ENCODE measurements at regions of chr13 and their contacts with region 1.

Region 1: DNA sequence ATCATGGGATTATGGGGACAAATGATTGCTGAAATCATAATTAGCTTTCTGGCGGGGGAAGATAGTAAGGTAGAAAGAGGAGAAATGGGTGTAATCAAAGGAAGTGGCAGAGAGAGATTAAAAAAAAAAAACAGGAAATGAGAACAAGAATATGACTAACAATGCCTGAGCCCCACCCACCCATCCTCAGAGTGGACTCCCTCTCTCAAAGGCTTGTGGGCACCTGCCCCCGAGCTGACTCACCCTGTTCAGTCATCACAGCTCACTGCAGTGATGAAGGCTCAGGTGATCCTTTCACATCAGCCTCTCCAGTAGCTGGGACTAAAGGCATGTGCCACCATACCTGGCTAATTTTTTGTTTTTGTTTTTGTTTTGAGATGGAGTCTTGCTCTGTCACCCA is 26.4 kb upstream of the TPT1 start:
- DNase-seq: peak; percentile 93
- H3K4me3 Mint-ChIP-seq: peak overlapping the region; percentile 22
- H3K27ac Mint-ChIP-seq: peak overlapping the region; percentile 86
- H3K4me1 Mint-ChIP-seq: peaks cover 66% of the 10 kb centered on the region
- H3K27me3 Mint-ChIP-seq: no peaks in the 10 kb centered on the region

Region 2: DNA sequence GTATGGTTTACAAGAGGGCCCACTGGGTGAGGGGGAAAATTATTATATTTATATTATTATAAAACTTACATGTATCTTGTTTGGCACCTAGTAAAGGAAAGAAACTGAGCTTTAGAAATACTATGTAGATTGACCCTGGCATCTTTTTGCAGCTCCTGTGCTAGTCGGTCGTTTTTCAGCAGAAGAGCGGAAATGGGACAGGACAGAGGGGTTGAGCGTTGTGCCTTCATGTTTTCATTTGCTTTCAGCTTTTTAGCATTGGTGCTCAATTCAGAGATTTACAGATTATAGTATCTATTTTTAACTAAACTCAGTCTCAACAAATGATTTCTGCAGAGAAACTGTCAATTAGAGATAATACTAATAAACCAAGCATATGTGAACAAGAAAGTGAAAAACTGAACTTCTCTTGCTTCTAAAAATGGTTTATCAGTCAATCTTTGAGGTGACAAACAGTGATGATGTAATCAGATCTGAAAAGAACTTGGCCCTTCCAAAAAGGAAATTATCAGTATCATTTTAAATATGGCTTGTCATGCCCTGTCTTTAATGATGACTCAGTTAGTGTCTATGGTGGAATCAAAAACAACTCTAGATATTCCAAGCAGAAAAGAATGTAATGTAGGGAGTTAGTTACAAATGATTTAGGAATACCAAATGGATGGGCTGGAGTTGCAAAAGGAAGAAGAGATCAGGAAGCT is 109.6 kb before region 1 on chr13:
- CTCF ChIA-PET with region 1: no interaction called
- POLR2A ChIA-PET with region 1: no interaction called
- DNase-seq: no peak
- H3K4me3 Mint-ChIP-seq: no peak overlapping the region
- H3K27ac Mint-ChIP-seq: peak overlapping the region; percentile 50
- H3K4me1 Mint-ChIP-seq: peaks cover 23% of the 10 kb centered on the region
- H3K27me3 Mint-ChIP-seq: no peaks in the 10 kb centered on the region

Region 3: DNA sequence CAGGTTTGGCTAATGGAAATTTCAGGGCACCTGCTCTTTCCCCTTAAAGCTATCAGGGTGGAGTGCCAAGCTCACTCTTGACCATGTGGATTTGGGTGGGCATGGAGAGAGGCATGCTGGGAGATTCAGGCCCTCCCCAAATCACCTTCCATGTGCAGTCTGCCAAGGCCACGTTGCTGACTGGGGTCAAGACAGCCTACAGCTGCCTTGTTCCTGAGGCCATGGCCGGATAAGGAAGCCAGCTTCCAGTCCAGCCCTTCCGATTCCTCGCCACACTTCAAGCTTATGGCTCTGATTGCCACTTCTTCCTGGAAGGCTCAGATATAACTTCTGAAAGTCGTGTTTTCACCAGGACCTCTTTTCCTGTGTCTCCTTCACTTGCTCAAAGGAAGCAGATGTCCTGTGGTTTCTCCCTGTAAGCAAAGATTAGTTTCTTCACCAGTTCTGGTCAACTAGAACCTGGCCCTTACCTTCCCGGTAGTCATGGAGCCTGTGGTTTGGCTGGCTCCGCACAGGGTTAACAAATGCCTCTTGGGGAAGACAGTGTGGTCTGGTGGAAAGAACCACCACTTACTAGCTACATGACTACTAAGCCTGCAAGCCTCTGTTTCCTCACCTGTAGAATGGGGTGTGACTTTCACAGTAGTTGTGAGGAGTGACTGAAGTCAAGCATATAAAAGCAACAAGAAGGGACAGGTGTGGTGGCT is 10.2 kb before region 1 on chr13:
- CTCF ChIA-PET with region 1: interaction called, 6 read pairs
- POLR2A ChIA-PET with region 1: interaction called, 14 read pairs
- DNase-seq: no peak
- H3K4me3 Mint-ChIP-seq: no peak overlapping the region
- H3K27ac Mint-ChIP-seq: peak overlapping the region; percentile 72
- H3K4me1 Mint-ChIP-seq: peaks cover 41% of the 10 kb centered on the region
- H3K27me3 Mint-ChIP-seq: no peaks in the 10 kb centered on the region

Region 4: GRCh38 chr13:45393941-45394570 is 26.7 kb after region 1 on chr13:
- CTCF ChIA-PET with region 1: interaction called, 78 read pairs
- POLR2A ChIA-PET with region 1: interaction called, 18 read pairs
- DNase-seq: peak; percentile 26
- H3K4me3 Mint-ChIP-seq: no peak overlapping the region
- H3K27ac Mint-ChIP-seq: no peak overlapping the region
- H3K4me1 Mint-ChIP-seq: peaks cover 48% of the 10 kb centered on the region
- H3K27me3 Mint-ChIP-seq: no peaks in the 10 kb centered on the region

Region 5: DNA sequence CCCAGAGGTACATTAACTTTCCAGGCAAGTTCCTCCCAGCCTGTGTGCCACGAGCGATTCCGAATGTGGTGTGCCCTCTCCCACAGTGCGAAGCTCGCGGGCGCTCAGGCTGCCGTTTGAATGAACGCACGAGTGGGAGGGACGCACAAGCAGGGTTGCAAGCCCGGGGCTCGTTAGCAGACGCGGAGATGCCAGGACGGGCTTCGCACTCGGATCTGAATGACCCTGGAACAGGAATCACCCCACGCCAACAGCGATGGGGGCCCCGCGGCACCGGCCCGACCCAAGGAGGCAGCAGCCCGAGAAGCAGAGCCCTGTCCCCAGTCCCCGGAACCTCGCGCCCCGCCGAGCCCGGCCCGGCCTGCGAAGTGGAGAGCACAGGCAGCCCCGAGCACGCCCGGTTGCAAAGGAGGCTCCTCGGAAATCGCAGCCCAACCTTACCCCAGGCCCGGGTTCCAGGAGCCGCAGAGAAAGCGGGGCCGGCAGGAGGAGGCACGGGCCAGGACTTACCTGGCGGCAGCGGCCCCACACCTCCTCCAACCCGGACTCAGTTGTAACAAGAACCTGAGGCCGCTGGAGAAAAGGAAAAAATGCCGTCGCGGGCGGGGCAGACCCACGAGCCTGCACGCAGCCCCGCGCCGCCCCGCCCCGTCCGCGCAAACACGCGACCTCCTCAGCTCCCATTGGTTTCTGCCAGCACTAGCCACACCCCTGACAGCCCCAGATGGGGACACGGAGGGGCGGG is 50.6 kb after region 1 on chr13 and contains the start of gene SLC25A30:
- CTCF ChIA-PET with region 1: interaction called, 30 read pairs
- POLR2A ChIA-PET with region 1: interaction called, 23 read pairs
- DNase-seq: peak; percentile 91
- H3K4me3 Mint-ChIP-seq: peak within 1 kb of the TSS; percentile 85
- H3K27ac Mint-ChIP-seq: peak within 1 kb of the TSS; percentile 96
- H3K4me1 Mint-ChIP-seq: peaks cover 18% of the 10 kb centered on the region
- H3K27me3 Mint-ChIP-seq: peaks cover 2% of the 10 kb centered on the region
- total RNA-seq, gene SLC25A30: 17.5 to 17.6 TPM

Region 6: DNA sequence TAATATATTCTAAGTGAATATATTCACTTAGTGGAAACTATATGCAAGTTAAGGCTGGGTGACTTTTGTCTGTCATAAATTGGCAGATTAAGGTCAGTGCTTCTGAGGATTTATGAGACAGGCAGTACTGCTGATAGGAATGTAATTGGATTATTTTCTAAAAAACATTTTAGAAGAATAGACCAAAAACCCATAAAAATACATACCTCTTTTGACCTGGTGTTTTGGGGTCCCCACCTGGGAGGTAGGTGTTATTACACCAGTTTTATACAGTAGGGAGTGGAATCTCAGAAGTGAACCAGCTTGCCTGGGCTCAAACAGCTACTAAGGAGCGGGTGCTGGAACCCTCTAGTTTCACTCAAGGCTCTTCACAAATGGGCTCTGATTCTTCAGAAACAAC is 122.7 kb after region 1 on chr13:
- CTCF ChIA-PET with region 1: interaction called, 12 read pairs
- POLR2A ChIA-PET with region 1: no interaction called
- DNase-seq: no peak
- H3K4me3 Mint-ChIP-seq: no peak overlapping the region
- H3K27ac Mint-ChIP-seq: no peak overlapping the region
- H3K4me1 Mint-ChIP-seq: peaks cover 2% of the 10 kb centered on the region
- H3K27me3 Mint-ChIP-seq: no peaks in the 10 kb centered on the region

Measured in activated CD4-positive, alpha-beta memory T cell treated with anti-CD3 and anti-CD28 coated beads, Interleukin-2, amount 10 ng/mL, durations not matched to agents 7 days and 5 days (primary cell).